Calu3 (cell line): ENCODE measurements at regions of chr19 and their contacts with region 1.

Region 1: DNA sequence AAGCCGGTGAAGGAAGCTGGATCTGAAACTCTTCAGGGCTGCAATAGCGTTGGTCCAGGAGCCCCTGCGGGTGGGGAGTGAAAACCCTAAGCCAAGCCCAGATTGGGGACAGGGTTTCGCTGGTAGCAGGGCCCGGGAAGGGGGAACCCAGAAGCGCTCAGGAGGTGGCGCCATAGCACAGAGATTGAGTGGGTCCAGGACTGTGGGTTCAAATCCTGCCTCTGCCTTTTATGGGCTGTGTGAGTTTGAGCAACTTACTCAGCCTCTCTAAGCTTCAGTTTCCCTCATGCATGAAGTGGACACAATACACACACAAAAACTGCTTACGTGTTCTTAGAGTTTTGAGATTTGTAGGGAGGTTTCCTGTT is 8.3 kb upstream of the SYCN start:
- DNase-seq: peak; percentile 64
- H3K4me3 Mint-ChIP-seq: no peak overlapping the region
- H3K27ac Mint-ChIP-seq: no peak overlapping the region
- H3K4me1 Mint-ChIP-seq: no peaks in the 10 kb centered on the region
- H3K27me3 Mint-ChIP-seq: peaks cover 45% of the 10 kb centered on the region
- CTCF ChIP-seq: peak; percentile 44

Region 2: GRCh38 chr19:38949580-38950367 is 262.6 kb before region 1 on chr19:
- CTCF ChIA-PET with region 1: interaction called, 16 read pairs
- intact Hi-C with region 1: no loop called
- DNase-seq: peak; percentile 93
- H3K4me3 Mint-ChIP-seq: peak overlapping the region; percentile 65
- H3K27ac Mint-ChIP-seq: no peak overlapping the region
- H3K4me1 Mint-ChIP-seq: peaks cover 17% of the 10 kb centered on the region
- H3K27me3 Mint-ChIP-seq: no peaks in the 10 kb centered on the region
- CTCF ChIP-seq: no peak

Region 3: GRCh38 chr19:39264306-39265290 is 52.2 kb after region 1 on chr19:
- CTCF ChIA-PET with region 1: no interaction called
- intact Hi-C with region 1: loop called (anchors 10 kb)
- DNase-seq: no peak
- H3K4me3 Mint-ChIP-seq: no peak overlapping the region
- H3K27ac Mint-ChIP-seq: no peak overlapping the region
- H3K4me1 Mint-ChIP-seq: peaks cover 5% of the 10 kb centered on the region
- H3K27me3 Mint-ChIP-seq: peaks cover 46% of the 10 kb centered on the region
- CTCF ChIP-seq: no peak

Region 4: GRCh38 chr19:39445265-39446111 is 233.1 kb after region 1 on chr19 and contains the start of gene SUPT5H:
- CTCF ChIA-PET with region 1: no interaction called
- intact Hi-C with region 1: no loop called
- DNase-seq: peak; percentile 98
- H3K4me3 Mint-ChIP-seq: peak within 1 kb of the TSS; percentile 96
- H3K27ac Mint-ChIP-seq: peak within 1 kb of the TSS; percentile 99
- H3K4me1 Mint-ChIP-seq: peaks cover 16% of the 10 kb centered on the region
- H3K27me3 Mint-ChIP-seq: no peaks in the 10 kb centered on the region
- CTCF ChIP-seq: no peak
- total RNA-seq, gene SUPT5H: 158 and 189 TPM in 2 replicates